Ascending aorta (tissue), 2 donors: ENCODE measurements at regions of chr17 and their contacts with region 1.

Region 1: DNA sequence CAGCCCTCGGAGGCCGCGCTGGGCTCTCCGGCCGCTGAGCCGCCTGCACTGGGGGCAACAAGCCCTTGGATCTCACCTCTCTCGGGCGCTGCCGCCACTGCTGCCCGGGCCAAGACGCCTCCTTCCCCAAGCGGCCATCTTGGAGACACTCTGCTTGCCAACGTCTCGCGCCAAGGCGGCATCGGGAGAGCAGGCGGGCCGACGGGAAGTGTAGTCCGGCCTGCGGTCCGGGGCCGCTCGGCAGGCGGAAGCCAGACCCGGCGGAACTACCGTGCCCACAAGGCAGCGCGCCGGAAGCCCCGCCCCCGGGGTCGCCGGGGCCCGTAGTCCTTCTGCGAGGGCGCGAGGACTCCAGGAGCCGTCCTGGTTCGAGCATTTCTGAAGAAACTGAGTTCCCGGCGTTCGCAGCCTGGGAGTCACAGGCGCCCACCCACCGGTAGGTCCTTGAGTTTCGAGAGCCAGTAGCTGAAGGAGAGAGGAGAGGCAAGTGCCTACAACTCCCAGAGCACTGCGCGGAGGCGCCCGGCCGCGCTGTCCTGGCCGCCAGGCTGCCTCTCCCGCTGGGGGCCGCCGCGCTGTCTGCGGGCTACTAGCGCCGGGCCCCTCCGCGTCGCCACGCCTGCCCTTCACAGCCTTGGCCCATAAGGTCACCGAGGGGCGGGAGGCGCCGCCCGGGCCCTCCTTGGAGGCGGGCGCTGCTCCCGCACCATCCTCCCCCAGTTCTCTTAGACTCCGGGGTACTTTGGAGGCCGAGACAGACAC is at the start of gene TMEM11:
- DNase-seq: peak; percentile 83 to 97
- H3K4me3 ChIP-seq: peak within 1 kb of the TSS; percentile 84 to 96
- H3K27ac ChIP-seq: peak within 1 kb of the TSS; percentile 95 to 97
- H3K4me1 ChIP-seq: peaks cover 8 to 34% of the 10 kb centered on the region in 2 donors
- H3K27me3 ChIP-seq: no peaks in the 10 kb centered on the region
- CTCF ChIP-seq: peak in 1 of 3 experiments; percentile 2
- total RNA-seq, gene TMEM11: 25.7 TPM

Region 2: GRCh38 chr17:21126645-21127510 is 87.3 kb before region 1 on chr17 and contains the start of gene DHRS7B:
- intact Hi-C with region 1: loop called (anchors 1 kb)
- DNase-seq: peak; percentile 79 to 97
- H3K4me3 ChIP-seq: peak within 1 kb of the TSS; percentile 81 to 85
- H3K27ac ChIP-seq: peak within 1 kb of the TSS; percentile 93 to 96
- H3K4me1 ChIP-seq: peaks cover 3 to 8% of the 10 kb centered on the region in 2 donors
- H3K27me3 ChIP-seq: no peaks in the 10 kb centered on the region
- CTCF ChIP-seq: peak in 1 of 3 experiments; percentile 4
- total RNA-seq, gene DHRS7B: 89.5 TPM

Region 3: GRCh38 chr17:21287596-21288449 is 73.6 kb after region 1 on chr17:
- intact Hi-C with region 1: loop called (anchors 1 kb)
- DNase-seq: peak; percentile 96 to 100
- H3K4me3 ChIP-seq: peak overlapping the region; percentile 91 to 94
- H3K27ac ChIP-seq: peak overlapping the region; percentile 95 to 97
- H3K4me1 ChIP-seq: peaks cover 29 to 47% of the 10 kb centered on the region in 2 donors
- H3K27me3 ChIP-seq: no peaks in the 10 kb centered on the region
- CTCF ChIP-seq: peak in 1 of 3 experiments; percentile 7